ENCODE measurements at regions of chr9 and their contacts with region 1.

Region 1: GRCh38 chr9:4297151-4297785 is 2.6 kb downstream of the GLIS3 start:
- DNase-seq: peak; percentile 11
- H3K4me3 Mint-ChIP-seq: peak overlapping the region; percentile 95
- H3K27ac Mint-ChIP-seq: peak overlapping the region; percentile 91
- H3K4me1 Mint-ChIP-seq: peaks cover 45% of the 10 kb centered on the region
- H3K27me3 Mint-ChIP-seq: peaks cover 42% of the 10 kb centered on the region

Region 2: GRCh38 chr9:3467593-3468219 is 829.6 kb before region 1 on chr9:
- intact Hi-C with region 1: loop called (anchors 2 kb)
- DNase-seq: peak; percentile 40
- H3K4me3 Mint-ChIP-seq: no peak overlapping the region
- H3K27ac Mint-ChIP-seq: no peak overlapping the region
- H3K4me1 Mint-ChIP-seq: peaks cover 6% of the 10 kb centered on the region
- H3K27me3 Mint-ChIP-seq: no peaks in the 10 kb centered on the region

Region 3: DNA sequence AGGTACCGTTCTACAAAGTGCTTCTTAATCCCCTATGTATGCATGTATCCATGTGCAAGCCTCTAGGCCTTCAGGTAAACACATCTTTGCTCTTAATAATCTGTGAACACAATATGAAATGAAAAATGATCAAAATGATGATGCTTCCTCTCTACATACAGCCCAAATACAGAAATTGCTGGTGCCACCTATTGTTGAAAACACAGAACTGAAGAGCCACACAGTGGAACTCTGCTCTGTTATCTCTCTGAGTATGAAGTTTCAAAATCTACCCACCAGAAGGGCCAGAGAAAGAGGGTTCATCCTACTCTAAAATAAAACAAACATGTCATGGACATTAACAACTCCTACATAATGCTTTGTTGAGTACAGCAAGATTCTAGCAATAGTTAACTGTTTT is 68.7 kb before region 1 on chr9:
- intact Hi-C with region 1: loop called (anchors 5 kb)
- DNase-seq: no peak
- H3K4me3 Mint-ChIP-seq: no peak overlapping the region
- H3K27ac Mint-ChIP-seq: no peak overlapping the region
- H3K4me1 Mint-ChIP-seq: peaks cover 6% of the 10 kb centered on the region
- H3K27me3 Mint-ChIP-seq: peaks cover 7% of the 10 kb centered on the region

Region 4: GRCh38 chr9:4269856-4270255 is 27.4 kb before region 1 on chr9:
- intact Hi-C with region 1: no loop called
- DNase-seq: no peak
- H3K4me3 Mint-ChIP-seq: no peak overlapping the region
- H3K27ac Mint-ChIP-seq: no peak overlapping the region
- H3K4me1 Mint-ChIP-seq: no peaks in the 10 kb centered on the region
- H3K27me3 Mint-ChIP-seq: no peaks in the 10 kb centered on the region

Region 5: DNA sequence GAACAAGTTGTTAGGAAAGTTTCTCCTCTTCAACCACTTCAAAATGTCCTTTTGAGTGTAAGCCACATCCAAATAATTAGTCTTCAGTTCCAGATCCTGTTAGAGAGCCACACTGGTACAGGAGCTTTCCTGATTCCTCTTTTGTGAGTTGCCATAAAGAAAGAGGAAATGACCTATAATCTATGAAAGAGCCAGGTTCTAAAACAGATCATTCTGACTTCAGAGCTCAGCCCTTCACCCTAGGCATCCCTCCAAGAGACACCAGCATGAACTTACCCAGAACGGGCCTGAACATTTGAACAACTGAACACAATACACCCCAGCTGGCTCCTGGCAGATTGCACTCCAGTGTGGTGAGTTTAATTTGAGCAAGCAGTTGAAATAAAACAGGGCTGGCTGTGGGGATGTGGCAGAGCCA is 218.7 kb after region 1 on chr9:
- intact Hi-C with region 1: loop called (anchors 2 kb)
- DNase-seq: no peak
- H3K4me3 Mint-ChIP-seq: no peak overlapping the region
- H3K27ac Mint-ChIP-seq: no peak overlapping the region
- H3K4me1 Mint-ChIP-seq: peaks cover 16% of the 10 kb centered on the region
- H3K27me3 Mint-ChIP-seq: peaks cover 8% of the 10 kb centered on the region

Region 6: GRCh38 chr9:4530375-4530774 is 233.1 kb after region 1 on chr9:
- intact Hi-C with region 1: no loop called
- DNase-seq: no peak
- H3K4me3 Mint-ChIP-seq: no peak overlapping the region
- H3K27ac Mint-ChIP-seq: peak overlapping the region; percentile 62
- H3K4me1 Mint-ChIP-seq: peaks cover 12% of the 10 kb centered on the region
- H3K27me3 Mint-ChIP-seq: peaks cover 4% of the 10 kb centered on the region

Measured in activated T-helper 1 cell treated with anti-CD3 and anti-CD28 coated beads, Interleukin-12 subunit alpha, Interleukin-12 subunit beta, Interleukin-2, Interleukin-4 antibody, amounts not matched to agents 30 ng/mL and 10 ng/mL and 1 ng/mL, durations not matched to agents 14 hours and 24 hours and 36 hours (primary cell).